Heart left ventricle (tissue), 16 donors: ENCODE measurements at regions of chr15 and their contacts with region 1.

Region 1: DNA sequence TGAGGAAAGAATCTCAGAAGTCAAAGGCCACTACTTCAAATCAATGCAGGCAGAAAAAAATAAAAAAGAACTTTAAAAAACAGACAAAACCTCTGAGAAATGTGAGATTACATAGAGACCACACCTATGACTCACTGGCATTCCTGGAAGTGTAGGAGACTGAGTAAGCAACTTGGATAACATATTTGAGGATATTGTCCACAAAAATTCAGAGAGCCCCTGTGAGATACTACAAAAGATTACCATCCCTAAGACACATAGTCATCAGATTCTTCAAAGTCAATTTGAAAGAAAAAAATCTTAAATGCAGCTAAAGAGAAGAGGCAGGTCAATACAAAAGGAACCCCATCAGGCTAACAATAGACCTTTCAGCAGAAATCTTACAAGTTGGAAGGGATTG is 887.3 kb downstream of the NTRK3 start:
- DNase-seq: no peak
- ATAC-seq: no peak
- H3K4me3 ChIP-seq: no peak overlapping the region
- H3K27ac ChIP-seq: no peak overlapping the region
- H3K4me1 ChIP-seq: no peaks in the 10 kb centered on the region
- H3K27me3 ChIP-seq: no peaks in the 10 kb centered on the region
- CTCF ChIP-seq: no peak
- POLR2A ChIP-seq: no peak

Region 2: DNA sequence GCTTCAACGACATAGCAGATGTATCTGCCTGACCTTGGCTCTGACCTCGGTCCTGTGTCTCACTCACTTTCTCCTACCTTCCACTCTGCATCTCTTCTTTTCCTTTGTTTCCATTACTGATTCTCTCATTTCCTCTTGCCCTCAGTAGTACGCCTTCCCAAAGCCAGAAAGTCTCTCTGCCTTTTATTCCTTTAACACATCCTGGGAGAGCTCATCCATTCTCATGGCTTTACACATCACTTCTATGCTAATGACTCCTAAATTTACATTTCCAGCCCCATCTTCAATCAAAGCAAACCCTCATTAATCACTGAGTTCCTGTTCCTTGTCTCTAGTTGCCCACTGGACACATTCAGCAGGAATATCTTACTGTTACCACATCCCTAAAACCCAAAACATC is 51.4 kb before region 1 on chr15:
- intact Hi-C with region 1: loop called in 1 of 10 experiments (anchors 5 kb)
- DNase-seq: no peak
- ATAC-seq: no peak
- H3K4me3 ChIP-seq: no peak overlapping the region
- H3K27ac ChIP-seq: no peak overlapping the region
- H3K4me1 ChIP-seq: no peaks in the 10 kb centered on the region
- H3K27me3 ChIP-seq: no peaks in the 10 kb centered on the region
- CTCF ChIP-seq: no peak
- POLR2A ChIP-seq: no peak